ENCODE measurements at regions of chr18 and their contacts with region 1.

Region 1: DNA sequence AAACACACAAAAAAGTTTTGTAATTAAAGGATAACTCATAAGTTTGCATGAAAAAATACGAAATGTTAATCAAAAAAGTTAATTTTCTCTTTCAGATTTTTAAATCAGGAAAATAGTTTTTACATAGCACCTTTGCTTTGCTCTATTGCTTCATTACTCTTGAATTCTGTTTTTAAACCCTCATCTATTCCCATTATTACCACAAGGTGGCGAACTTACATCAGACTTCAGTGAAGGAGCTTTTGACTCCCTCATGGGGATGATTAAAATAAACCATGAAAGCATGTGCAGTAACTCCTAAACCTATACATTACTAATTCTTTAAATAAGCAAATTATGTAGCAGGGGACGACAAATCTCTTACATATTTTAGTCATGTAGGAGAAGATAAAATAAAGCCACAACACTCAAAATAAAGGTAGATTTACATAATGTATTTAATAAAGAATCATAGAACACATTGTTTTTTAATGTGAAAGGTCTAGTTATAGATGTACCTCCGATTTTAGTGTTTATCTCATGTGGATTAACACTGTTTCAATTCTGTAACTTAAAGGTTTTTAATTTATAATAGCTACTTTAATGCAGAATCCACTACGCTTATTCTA is 105.2 kb downstream of the NETO1 start:
- DNase-seq: peak; percentile 27
- CTCF ChIP-seq: peak; percentile 75

Region 2: GRCh38 chr18:72342933-72343332 is 419.7 kb before region 1 on chr18:
- in situ Hi-C with region 1: no loop called
- DNase-seq: no peak
- CTCF ChIP-seq: no peak

Region 3: GRCh38 chr18:72588360-72588759 is 174.3 kb before region 1 on chr18:
- in situ Hi-C with region 1: no loop called
- DNase-seq: no peak
- CTCF ChIP-seq: no peak

Region 4: DNA sequence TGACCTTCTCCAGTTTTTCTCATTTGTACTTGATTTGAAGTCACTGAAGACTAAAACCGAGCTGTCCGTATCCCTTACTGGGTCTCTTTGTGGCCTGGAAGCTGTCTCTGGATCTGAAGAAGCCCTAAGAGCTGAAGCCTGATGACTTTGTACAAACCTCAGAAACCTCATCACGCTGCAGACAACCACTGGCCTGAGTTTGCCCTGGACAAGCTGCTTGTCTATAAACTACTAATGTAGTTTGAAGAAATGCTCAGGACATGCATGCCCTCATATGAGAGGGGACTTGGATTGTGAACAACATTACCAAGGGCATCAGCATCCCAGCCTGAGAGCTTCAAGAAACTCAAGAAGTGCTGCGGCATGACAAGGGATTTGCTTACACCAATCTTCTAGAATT is 139.2 kb before region 1 on chr18:
- in situ Hi-C with region 1: no loop called
- DNase-seq: no peak
- CTCF ChIP-seq: no peak

Region 5: GRCh38 chr18:73842795-73843394 is 1080.3 kb after region 1 on chr18:
- in situ Hi-C with region 1: loop called (anchors 25 kb)
- DNase-seq: peak; percentile 56
- CTCF ChIP-seq: peak; percentile 92